ENCODE measurements at regions of chr4 and their contacts with region 1.

Region 1: DNA sequence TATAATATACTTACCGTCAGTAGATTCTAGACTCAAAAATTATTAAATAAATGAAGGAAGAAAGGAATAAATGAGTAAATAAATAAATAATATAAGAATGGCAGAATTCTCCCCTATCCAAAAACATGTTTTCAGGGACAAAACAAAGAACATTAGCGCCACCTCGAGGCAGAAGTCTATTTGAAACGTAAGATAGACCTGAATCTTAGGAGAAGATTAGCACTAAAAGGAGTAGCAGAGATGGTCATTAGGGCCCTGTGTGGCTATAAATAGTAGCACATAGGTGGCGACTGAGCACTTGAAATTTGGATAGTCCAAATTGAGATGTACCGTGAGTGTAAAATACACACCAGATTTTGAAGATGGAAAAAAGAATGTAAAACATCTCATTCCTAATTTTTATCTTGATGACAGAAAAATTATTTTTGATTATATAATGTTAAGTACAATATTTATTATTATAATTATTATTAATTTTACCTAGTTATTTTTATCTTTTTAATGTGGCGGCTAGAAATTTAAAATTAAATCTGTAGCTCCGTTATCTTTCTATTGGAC is 24.3 kb upstream of the SRD5A3 start:
- DNase-seq: peak in 6 of 9 donors; percentile 9 to 42 (median 18)
- ATAC-seq: no peak
- H3K4me3 ChIP-seq: no peak overlapping the region
- H3K4me3 Mint-ChIP-seq: no peak overlapping the region
- H3K27ac ChIP-seq: no peak overlapping the region
- H3K27ac Mint-ChIP-seq: no peak overlapping the region
- H3K4me1 ChIP-seq: peaks cover 0 to 7% of the 10 kb centered on the region in 2 donors
- H3K4me1 Mint-ChIP-seq: peaks cover 12 to 30% (median 22%) of the 10 kb centered on the region in 7 donors
- H3K27me3 ChIP-seq: no peaks in the 10 kb centered on the region
- H3K27me3 Mint-ChIP-seq: no peaks in the 10 kb centered on the region

Region 2: GRCh38 chr4:54879576-54879975 is 442.2 kb before region 1 on chr4:
- CTCF ChIA-PET with region 1: no interaction called
- POLR2A ChIA-PET with region 1: no interaction called
- intact Hi-C with region 1: no loop called
- DNase-seq: no peak
- ATAC-seq: no peak
- H3K4me3 ChIP-seq: no peak overlapping the region
- H3K4me3 Mint-ChIP-seq: no peak overlapping the region
- H3K27ac ChIP-seq: no peak overlapping the region
- H3K27ac Mint-ChIP-seq: no peak overlapping the region
- H3K4me1 ChIP-seq: no peaks in the 10 kb centered on the region
- H3K4me1 Mint-ChIP-seq: peaks cover 0 to 8% (median 0%) of the 10 kb centered on the region in 7 donors
- H3K27me3 ChIP-seq: no peaks in the 10 kb centered on the region
- H3K27me3 Mint-ChIP-seq: peaks cover 0 to 7% (median 0%) of the 10 kb centered on the region in 5 donors

Region 3: DNA sequence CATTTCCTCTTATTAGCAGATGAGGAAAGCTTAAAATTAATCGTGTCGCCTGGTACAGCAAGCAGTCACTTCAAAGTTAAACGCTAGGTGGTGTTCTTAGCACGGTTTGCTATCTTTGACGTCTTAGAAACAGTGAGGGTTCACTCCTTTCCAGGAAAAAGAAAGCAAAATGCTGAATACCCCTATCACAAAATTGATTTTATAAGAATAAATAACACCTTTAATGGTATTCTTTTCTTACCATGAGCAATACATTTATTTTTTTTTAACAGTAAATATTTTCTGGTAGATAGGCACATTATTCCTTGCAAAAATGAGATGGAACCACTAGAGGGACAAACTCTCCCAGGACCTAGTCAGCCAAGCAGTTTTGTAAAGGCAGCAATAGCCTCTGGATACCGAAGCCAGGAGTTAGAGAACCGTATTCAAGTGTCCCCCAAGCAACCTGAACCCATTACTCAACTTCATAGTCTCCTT is 350.3 kb before region 1 on chr4:
- CTCF ChIA-PET with region 1: no interaction called
- POLR2A ChIA-PET with region 1: no interaction called
- intact Hi-C with region 1: loop called (anchors 1 to 5 kb)
- DNase-seq: peak in 4 of 9 donors; percentile 24 to 34 (median 32)
- ATAC-seq: peak; percentile 67
- H3K4me3 ChIP-seq: no peak overlapping the region
- H3K4me3 Mint-ChIP-seq: no peak overlapping the region
- H3K27ac ChIP-seq: no peak overlapping the region
- H3K27ac Mint-ChIP-seq: no peak overlapping the region
- H3K4me1 ChIP-seq: no peaks in the 10 kb centered on the region
- H3K4me1 Mint-ChIP-seq: no peaks in the 10 kb centered on the region
- H3K27me3 ChIP-seq: no peaks in the 10 kb centered on the region
- H3K27me3 Mint-ChIP-seq: peaks cover 0 to 13% (median 9%) of the 10 kb centered on the region in 5 donors

Region 4: DNA sequence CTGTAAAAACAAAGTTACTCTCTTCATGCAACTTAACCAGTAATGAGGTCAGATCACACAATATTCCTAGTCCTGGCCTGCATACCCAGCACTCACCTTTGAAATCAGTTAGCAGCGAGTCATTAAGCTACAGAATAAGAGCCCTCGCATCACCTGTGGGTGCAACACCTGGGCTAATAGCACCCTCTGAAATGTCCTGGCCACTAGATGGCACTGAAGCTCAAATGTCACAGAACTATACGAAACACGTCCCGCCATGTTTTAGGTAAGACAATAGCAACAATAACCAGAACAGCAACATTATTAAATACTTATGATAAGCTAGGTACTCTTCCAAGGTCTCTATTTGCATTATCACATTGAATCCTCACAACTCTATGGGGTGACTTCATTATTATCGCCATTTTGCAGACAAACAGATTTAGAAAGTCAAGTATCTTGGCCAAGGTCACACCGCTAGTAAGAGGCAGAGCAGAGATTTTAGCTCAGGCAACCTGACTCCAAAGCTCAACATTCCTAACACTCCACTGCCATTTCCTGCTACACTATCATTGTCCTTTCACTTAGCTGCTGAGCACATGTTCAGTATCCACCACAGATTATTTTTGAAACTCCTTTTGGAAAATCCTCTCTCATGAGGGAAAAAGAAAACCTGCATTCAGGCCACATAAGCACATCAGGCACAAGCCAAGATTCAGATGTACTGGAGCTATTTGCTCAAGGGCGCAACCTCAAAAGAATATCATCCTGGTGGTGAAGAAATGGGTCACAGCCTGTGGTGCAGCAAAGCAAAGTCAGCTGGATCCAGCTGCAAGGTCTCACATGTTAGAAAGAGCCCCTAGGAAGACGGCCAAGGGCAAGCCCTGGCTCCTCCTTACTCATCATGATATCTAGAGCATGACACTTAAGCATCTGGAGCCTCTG is 136.9 kb before region 1 on chr4:
- CTCF ChIA-PET with region 1: no interaction called
- POLR2A ChIA-PET with region 1: no interaction called
- intact Hi-C with region 1: loop called in 1 of 2 experiments (anchors 1 kb)
- DNase-seq: peak in 6 of 9 donors; percentile 4 to 22 (median 15)
- ATAC-seq: no peak
- H3K4me3 ChIP-seq: no peak overlapping the region
- H3K4me3 Mint-ChIP-seq: no peak overlapping the region
- H3K27ac ChIP-seq: no peak overlapping the region
- H3K27ac Mint-ChIP-seq: no peak overlapping the region
- H3K4me1 ChIP-seq: no peaks in the 10 kb centered on the region
- H3K4me1 Mint-ChIP-seq: no peaks in the 10 kb centered on the region
- H3K27me3 ChIP-seq: no peaks in the 10 kb centered on the region
- H3K27me3 Mint-ChIP-seq: peaks cover 0 to 23% (median 17%) of the 10 kb centered on the region in 5 donors

Region 5: DNA sequence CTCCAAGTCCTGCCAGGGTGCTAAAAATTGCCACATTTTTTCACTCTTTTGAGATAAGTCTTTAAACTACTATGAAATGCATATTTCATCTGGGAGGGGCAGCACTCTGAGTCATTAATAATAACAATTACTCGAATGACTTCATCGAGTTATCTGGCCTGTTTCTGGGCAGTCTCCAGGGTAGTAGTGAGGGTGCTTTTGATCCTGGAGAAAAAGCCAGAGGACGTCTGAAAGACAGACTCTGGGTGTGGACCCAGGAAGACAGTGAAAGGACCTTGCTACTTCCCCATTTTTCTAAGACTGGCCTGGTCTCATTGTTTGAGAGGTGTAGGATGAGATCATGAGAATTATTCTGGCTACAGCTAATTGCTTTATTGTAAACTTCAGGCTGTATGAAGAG is 18.0 kb before region 1 on chr4:
- CTCF ChIA-PET with region 1: no interaction called
- POLR2A ChIA-PET with region 1: no interaction called
- intact Hi-C with region 1: no loop called
- DNase-seq: no peak
- ATAC-seq: no peak
- H3K4me3 ChIP-seq: no peak overlapping the region
- H3K4me3 Mint-ChIP-seq: no peak overlapping the region
- H3K27ac ChIP-seq: no peak overlapping the region
- H3K27ac Mint-ChIP-seq: no peak overlapping the region
- H3K4me1 ChIP-seq: no peaks in the 10 kb centered on the region
- H3K4me1 Mint-ChIP-seq: no peaks in the 10 kb centered on the region
- H3K27me3 ChIP-seq: no peaks in the 10 kb centered on the region
- H3K27me3 Mint-ChIP-seq: peaks cover 0 to 14% (median 4%) of the 10 kb centered on the region in 5 donors

Region 6: DNA sequence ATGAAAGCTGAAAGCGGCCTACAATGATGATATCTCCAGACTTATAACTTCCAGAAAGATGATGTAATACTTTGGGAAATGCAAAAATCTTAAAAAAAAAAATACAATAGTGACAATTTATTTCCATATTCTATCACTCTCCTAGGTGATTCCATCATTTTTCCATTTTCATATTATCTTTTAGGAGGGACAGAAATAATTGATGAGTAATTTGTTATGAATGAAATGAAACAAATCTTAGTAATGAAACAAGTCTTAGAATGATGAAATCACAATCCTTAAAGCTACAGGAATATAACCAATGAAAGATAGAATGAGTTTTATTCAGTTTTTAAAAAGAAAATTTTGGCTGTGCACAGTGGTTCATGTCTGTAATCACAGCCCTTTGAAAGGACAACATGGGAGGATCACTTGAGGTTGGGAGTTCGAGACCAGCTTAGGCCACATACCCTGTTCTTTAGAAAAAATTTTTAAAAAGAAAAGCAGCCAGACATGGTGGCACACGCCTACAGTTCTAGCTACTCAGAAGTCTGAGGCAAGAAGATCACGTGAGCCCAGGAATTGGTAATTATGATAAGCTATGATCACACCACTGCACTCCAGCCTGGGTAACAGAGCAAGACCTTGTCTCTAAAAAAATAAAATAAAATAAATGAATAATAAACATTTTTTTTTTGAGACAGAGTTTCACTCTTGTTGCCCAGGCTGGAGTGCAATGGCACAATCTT is 203.2 kb after region 1 on chr4:
- CTCF ChIA-PET with region 1: no interaction called
- POLR2A ChIA-PET with region 1: no interaction called
- intact Hi-C with region 1: no loop called
- DNase-seq: no peak
- ATAC-seq: no peak
- H3K4me3 ChIP-seq: no peak overlapping the region
- H3K4me3 Mint-ChIP-seq: no peak overlapping the region
- H3K27ac ChIP-seq: no peak overlapping the region
- H3K27ac Mint-ChIP-seq: no peak overlapping the region
- H3K4me1 ChIP-seq: no peaks in the 10 kb centered on the region
- H3K4me1 Mint-ChIP-seq: peaks cover 0 to 23% (median 13%) of the 10 kb centered on the region in 7 donors
- H3K27me3 ChIP-seq: no peaks in the 10 kb centered on the region
- H3K27me3 Mint-ChIP-seq: no peaks in the 10 kb centered on the region

Measured in naive thymus-derived CD4-positive, alpha-beta T cell (primary cell).